CD8-positive, alpha-beta memory T cell (primary cell): ENCODE measurements at regions of chr16 and their contacts with region 1.

Region 1: GRCh38 chr16:11797166-11797956 is at the start of gene ZC3H7A:
- DNase-seq: peak; percentile 90 to 95 (median 93)
- H3K4me3 ChIP-seq: peak within 1 kb of the TSS; percentile 97
- H3K4me3 Mint-ChIP-seq: peak within 1 kb of the TSS; percentile 93 to 97 (median 95)
- H3K27ac ChIP-seq: peak within 1 kb of the TSS; percentile 98
- H3K27ac Mint-ChIP-seq: peak within 1 kb of the TSS; percentile 97 to 100 (median 98)
- H3K4me1 ChIP-seq: peaks cover 64% of the 10 kb centered on the region
- H3K4me1 Mint-ChIP-seq: peaks cover 58 to 75% (median 74%) of the 10 kb centered on the region in 3 donors
- H3K27me3 ChIP-seq: no peaks in the 10 kb centered on the region
- H3K27me3 Mint-ChIP-seq: peaks cover 0 to 5% of the 10 kb centered on the region in 2 donors
- total RNA-seq, gene ZC3H7A: 51.9 to 54.2 TPM

Region 2: DNA sequence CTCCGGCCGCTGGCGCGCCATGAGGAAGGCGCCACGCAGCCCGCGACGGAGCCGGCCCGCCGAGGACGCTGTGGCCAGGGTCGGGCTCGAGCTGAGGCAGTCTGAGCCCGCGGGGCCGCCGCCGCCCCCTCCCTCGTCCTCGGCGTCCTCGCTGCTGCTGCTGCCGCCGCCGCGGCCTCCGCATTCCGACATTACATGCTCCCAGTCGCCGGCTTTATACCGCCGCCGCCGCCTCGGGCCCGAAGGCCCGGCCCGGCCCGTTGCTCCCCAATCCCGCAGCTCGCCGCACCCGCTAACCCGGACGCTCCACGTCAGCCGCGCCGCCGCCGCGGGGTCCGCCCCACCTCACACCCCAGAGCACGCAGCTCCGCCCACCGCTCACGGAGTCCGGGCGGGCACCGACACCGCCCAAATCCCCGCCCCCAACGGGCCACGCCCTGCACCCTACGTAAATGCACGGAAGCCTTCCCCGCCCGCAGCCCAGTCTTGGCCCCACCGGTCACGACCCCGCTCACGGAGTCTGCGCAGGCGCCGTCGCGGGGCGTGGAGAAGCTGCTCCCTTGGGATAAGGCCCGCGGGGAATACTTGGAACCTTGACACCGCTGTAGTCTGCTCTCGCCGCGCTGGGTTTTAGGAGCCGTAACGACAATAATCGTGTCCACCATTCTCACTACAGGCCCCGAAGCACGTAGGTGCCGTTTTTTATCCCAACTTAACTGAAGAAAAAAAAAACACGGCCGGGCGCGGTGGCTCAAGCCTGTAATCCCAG is 54.6 kb before region 1 on chr16 and contains the start of gene TXNDC11:
- CTCF ChIA-PET with region 1: interaction called, 34 read pairs
- POLR2A ChIA-PET with region 1: interaction called, 60 read pairs
- DNase-seq: peak; percentile 99 to 100 (median 100)
- H3K4me3 ChIP-seq: peak within 1 kb of the TSS; percentile 91
- H3K4me3 Mint-ChIP-seq: peak within 1 kb of the TSS; percentile 92 to 96 (median 94)
- H3K27ac ChIP-seq: peak within 1 kb of the TSS; percentile 91
- H3K27ac Mint-ChIP-seq: peak within 1 kb of the TSS; percentile 95 to 99 (median 98)
- H3K4me1 ChIP-seq: peaks cover 48% of the 10 kb centered on the region
- H3K4me1 Mint-ChIP-seq: peaks cover 50 to 57% (median 51%) of the 10 kb centered on the region in 3 donors
- H3K27me3 ChIP-seq: no peaks in the 10 kb centered on the region
- H3K27me3 Mint-ChIP-seq: no peaks in the 10 kb centered on the region
- total RNA-seq, gene TXNDC11: 32.8 to 38.8 TPM

Region 3: DNA sequence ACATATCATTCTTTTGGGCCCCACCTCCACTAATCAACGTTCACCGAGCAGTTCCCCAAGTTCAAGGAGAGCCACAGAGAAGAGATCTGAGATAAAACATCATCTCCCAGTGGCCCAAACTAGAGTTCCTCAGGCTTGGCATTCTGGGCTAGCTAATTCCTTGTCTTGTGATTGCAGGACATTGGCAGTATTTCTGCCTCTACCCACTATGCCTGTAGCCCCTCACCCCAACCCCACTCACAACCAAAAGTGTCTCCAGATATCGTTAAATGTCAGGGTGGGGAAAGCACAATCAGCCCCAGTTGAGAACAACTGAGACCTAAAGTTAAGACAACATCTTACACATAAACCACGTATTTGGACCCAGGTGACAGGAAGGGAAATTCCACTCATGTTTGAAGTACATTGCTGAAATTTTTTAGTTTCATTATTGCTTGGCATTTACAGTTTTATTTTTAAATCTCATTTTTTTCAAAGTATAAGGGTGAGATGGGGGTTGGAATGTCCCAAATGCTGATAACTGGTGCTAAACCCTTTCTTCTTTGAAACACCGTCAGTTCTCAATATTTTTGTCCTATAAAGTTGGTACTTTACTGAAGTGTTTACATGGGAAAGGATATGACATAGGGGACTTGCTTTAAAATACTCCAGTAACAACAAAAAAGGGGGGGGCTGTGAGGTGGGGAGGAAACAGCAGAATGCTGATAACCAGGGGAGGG is 13.9 kb before region 1 on chr16:
- CTCF ChIA-PET with region 1: interaction called, 92 read pairs
- POLR2A ChIA-PET with region 1: interaction called, 45 read pairs
- DNase-seq: peak; percentile 24 to 81 (median 68)
- H3K4me3 ChIP-seq: peak overlapping the region; percentile 58
- H3K4me3 Mint-ChIP-seq: peak overlapping the region; percentile 75 to 93 (median 86)
- H3K27ac ChIP-seq: peak overlapping the region; percentile 83
- H3K27ac Mint-ChIP-seq: peak overlapping the region; percentile 96 to 99 (median 98)
- H3K4me1 ChIP-seq: peaks cover 45% of the 10 kb centered on the region
- H3K4me1 Mint-ChIP-seq: peaks cover 50 to 69% (median 66%) of the 10 kb centered on the region in 3 donors
- H3K27me3 ChIP-seq: no peaks in the 10 kb centered on the region
- H3K27me3 Mint-ChIP-seq: no peaks in the 10 kb centered on the region

Region 4: GRCh38 chr16:11880007-11880406 is 82.6 kb after region 1 on chr16:
- CTCF ChIA-PET with region 1: no interaction called
- POLR2A ChIA-PET with region 1: no interaction called
- DNase-seq: no peak
- H3K4me3 ChIP-seq: no peak overlapping the region
- H3K4me3 Mint-ChIP-seq: no peak overlapping the region
- H3K27ac ChIP-seq: no peak overlapping the region
- H3K27ac Mint-ChIP-seq: no peak overlapping the region
- H3K4me1 ChIP-seq: no peaks in the 10 kb centered on the region
- H3K4me1 Mint-ChIP-seq: peaks cover 0 to 5% (median 0%) of the 10 kb centered on the region in 3 donors
- H3K27me3 ChIP-seq: no peaks in the 10 kb centered on the region
- H3K27me3 Mint-ChIP-seq: no peaks in the 10 kb centered on the region

Region 5: GRCh38 chr16:11994143-11995119 is 197.1 kb after region 1 on chr16:
- CTCF ChIA-PET with region 1: no interaction called
- POLR2A ChIA-PET with region 1: no interaction called
- DNase-seq: no peak
- H3K4me3 ChIP-seq: no peak overlapping the region
- H3K4me3 Mint-ChIP-seq: no peak overlapping the region
- H3K27ac ChIP-seq: no peak overlapping the region
- H3K27ac Mint-ChIP-seq: peak overlapping the region in 1 of 8 donors; percentile 19
- H3K4me1 ChIP-seq: no peaks in the 10 kb centered on the region
- H3K4me1 Mint-ChIP-seq: peaks cover 6 to 17% (median 14%) of the 10 kb centered on the region in 3 donors
- H3K27me3 ChIP-seq: no peaks in the 10 kb centered on the region
- H3K27me3 Mint-ChIP-seq: no peaks in the 10 kb centered on the region

Region 6: GRCh38 chr16:12917653-12918052 is 1120.3 kb after region 1 on chr16:
- CTCF ChIA-PET with region 1: no interaction called
- POLR2A ChIA-PET with region 1: no interaction called
- DNase-seq: no peak
- H3K4me3 ChIP-seq: no peak overlapping the region
- H3K4me3 Mint-ChIP-seq: no peak overlapping the region
- H3K27ac ChIP-seq: no peak overlapping the region
- H3K27ac Mint-ChIP-seq: no peak overlapping the region
- H3K4me1 ChIP-seq: no peaks in the 10 kb centered on the region
- H3K4me1 Mint-ChIP-seq: no peaks in the 10 kb centered on the region
- H3K27me3 ChIP-seq: no peaks in the 10 kb centered on the region
- H3K27me3 Mint-ChIP-seq: peaks cover 6 to 15% of the 10 kb centered on the region in 2 donors